A673 (cell line): ENCODE measurements at regions of chr13 and their contacts with region 1.

Region 1: DNA sequence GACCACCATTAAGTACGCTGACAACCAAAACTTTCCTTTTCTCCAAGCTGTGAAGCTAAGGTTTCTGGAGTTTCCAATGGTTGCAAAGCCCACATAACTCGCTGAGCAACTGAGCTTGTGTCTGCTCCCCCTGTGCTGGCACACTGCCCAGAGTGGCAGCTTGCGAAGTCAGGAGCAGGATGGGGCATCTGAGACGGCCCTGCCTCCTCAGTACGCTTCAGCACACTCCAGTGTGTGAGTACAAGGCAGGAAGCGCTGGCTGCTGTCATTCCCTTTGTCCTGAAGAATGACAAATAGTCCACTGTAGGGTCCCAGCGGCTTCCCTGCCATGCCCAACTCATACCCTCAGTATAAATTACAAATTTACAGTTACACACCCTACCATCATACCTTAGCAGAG is 51.5 kb downstream of the SKA3 start:
- DNase-seq: peak; percentile 97
- H3K4me3 ChIP-seq: no peak overlapping the region
- H3K27ac ChIP-seq: peak overlapping the region; percentile 31
- H3K4me1 ChIP-seq: no peaks in the 10 kb centered on the region
- H3K27me3 ChIP-seq: no peaks in the 10 kb centered on the region
- CTCF ChIP-seq: no peak

Region 2: GRCh38 chr13:21016487-21016886 is 108.4 kb before region 1 on chr13:
- CTCF ChIA-PET with region 1: no interaction called
- POLR2A ChIA-PET with region 1: interaction called, 14 read pairs
- intact Hi-C with region 1: no loop called
- DNase-seq: no peak
- H3K4me3 ChIP-seq: peak overlapping the region; percentile 13
- H3K27ac ChIP-seq: peak overlapping the region; percentile 85
- H3K4me1 ChIP-seq: peaks cover 52% of the 10 kb centered on the region
- H3K27me3 ChIP-seq: no peaks in the 10 kb centered on the region
- CTCF ChIP-seq: no peak

Region 3: GRCh38 chr13:21202764-21203538 is 78.1 kb after region 1 on chr13:
- CTCF ChIA-PET with region 1: no interaction called
- POLR2A ChIA-PET with region 1: no interaction called
- intact Hi-C with region 1: no loop called
- DNase-seq: no peak
- H3K4me3 ChIP-seq: no peak overlapping the region
- H3K27ac ChIP-seq: peak overlapping the region; percentile 31
- H3K4me1 ChIP-seq: peaks cover 21% of the 10 kb centered on the region
- H3K27me3 ChIP-seq: no peaks in the 10 kb centered on the region
- CTCF ChIP-seq: no peak